Activated CD4-positive, alpha-beta memory T cell treated with anti-CD3 and anti-CD28 coated beads for 36 hours (primary cell): ENCODE measurements at regions of chr13 and their contacts with region 1.

Region 1: DNA sequence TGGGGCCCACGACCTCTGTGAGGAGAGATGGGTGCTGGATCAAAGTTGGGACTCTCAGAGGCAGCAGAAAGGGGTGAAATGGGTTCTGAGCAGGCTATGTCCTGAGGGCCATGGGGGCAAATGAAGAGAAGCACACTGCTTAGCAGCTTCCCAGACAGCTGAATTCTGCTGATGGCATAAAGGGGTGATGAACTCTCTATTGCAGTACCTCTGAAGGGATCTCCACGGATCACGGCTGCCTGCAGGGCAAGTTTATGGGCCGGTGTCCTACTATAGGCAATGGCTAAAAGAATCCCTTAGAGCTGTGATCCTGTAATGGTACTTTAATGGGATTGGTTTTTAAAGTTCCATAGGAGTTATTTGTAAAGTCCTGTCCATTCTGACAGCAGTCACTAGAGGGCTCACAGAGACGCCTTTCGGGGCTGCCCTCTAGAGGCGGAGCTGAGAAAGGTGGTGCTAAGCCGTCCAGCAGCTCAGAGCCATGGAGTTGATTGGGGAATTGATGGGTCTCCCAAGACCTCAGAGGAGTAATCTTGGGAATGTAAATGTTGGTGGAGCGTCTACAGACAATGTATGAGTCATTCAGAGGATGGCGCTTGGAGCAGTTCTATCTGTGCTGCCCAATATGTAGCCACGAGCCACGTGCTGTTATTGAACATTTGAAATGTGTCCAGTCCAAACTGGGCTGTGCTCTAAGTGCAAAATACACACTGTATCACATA is 287.3 kb downstream of the COG6 start:
- DNase-seq: peak; percentile 78
- H3K4me3 Mint-ChIP-seq: no peak overlapping the region
- H3K27ac Mint-ChIP-seq: peak overlapping the region; percentile 9
- H3K4me1 Mint-ChIP-seq: peaks cover 6% of the 10 kb centered on the region
- H3K27me3 Mint-ChIP-seq: no peaks in the 10 kb centered on the region

Region 2: GRCh38 chr13:39684531-39685137 is 258.1 kb before region 1 on chr13:
- CTCF ChIA-PET with region 1: interaction called, 10 read pairs
- POLR2A ChIA-PET with region 1: no interaction called
- intact Hi-C with region 1: loop called (anchors 2 kb)
- DNase-seq: no peak
- H3K4me3 Mint-ChIP-seq: no peak overlapping the region
- H3K27ac Mint-ChIP-seq: no peak overlapping the region
- H3K4me1 Mint-ChIP-seq: peaks cover 20% of the 10 kb centered on the region
- H3K27me3 Mint-ChIP-seq: no peaks in the 10 kb centered on the region

Region 3: GRCh38 chr13:39967199-39967959 is 24.7 kb after region 1 on chr13:
- CTCF ChIA-PET with region 1: interaction called, 15 read pairs
- POLR2A ChIA-PET with region 1: no interaction called
- intact Hi-C with region 1: no loop called
- DNase-seq: no peak
- H3K4me3 Mint-ChIP-seq: no peak overlapping the region
- H3K27ac Mint-ChIP-seq: no peak overlapping the region
- H3K4me1 Mint-ChIP-seq: peaks cover 8% of the 10 kb centered on the region
- H3K27me3 Mint-ChIP-seq: peaks cover 7% of the 10 kb centered on the region

Region 4: GRCh38 chr13:40016953-40017660 is 74.4 kb after region 1 on chr13:
- CTCF ChIA-PET with region 1: interaction called, 11 read pairs
- POLR2A ChIA-PET with region 1: no interaction called
- intact Hi-C with region 1: no loop called
- DNase-seq: no peak
- H3K4me3 Mint-ChIP-seq: no peak overlapping the region
- H3K27ac Mint-ChIP-seq: no peak overlapping the region
- H3K4me1 Mint-ChIP-seq: no peaks in the 10 kb centered on the region
- H3K27me3 Mint-ChIP-seq: peaks cover 2% of the 10 kb centered on the region

Region 5: DNA sequence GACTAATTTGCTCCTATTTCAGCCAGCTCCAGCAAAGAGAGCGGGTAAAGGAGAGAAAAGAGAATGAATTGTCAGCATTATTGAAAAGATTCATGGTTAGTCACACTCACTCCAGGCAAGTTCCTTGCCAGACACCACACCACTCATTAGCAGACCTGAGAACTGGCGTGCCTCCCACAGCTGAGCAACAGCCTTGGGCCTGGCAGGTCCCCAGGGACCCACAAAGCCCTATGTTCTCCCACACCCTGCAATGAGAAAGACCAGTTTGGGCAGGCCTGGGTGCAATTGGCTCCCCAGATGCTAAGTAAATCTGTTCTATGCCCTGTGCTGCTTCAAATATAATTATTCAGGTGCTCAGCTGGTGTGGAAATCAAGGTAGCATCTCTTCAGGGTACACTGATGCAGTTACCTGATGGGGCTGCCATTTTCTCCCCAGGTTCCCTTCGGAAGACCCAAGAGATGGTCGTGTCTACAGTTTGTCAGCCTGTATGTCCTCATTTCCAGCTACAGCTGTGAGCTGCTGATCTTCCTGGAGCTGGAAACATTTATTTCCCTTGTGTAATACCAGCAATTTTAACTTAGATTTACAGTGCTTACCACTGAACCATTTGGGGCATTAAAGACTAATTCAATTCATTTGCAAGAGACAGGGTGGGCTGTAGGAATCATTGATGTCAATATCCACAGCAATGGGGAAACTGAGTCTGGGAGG is 117.7 kb after region 1 on chr13:
- CTCF ChIA-PET with region 1: interaction called, 13 read pairs
- POLR2A ChIA-PET with region 1: no interaction called
- intact Hi-C with region 1: no loop called
- DNase-seq: peak; percentile 83
- H3K4me3 Mint-ChIP-seq: peak overlapping the region; percentile 42
- H3K27ac Mint-ChIP-seq: peak overlapping the region; percentile 47
- H3K4me1 Mint-ChIP-seq: peaks cover 46% of the 10 kb centered on the region
- H3K27me3 Mint-ChIP-seq: no peaks in the 10 kb centered on the region

Region 6: DNA sequence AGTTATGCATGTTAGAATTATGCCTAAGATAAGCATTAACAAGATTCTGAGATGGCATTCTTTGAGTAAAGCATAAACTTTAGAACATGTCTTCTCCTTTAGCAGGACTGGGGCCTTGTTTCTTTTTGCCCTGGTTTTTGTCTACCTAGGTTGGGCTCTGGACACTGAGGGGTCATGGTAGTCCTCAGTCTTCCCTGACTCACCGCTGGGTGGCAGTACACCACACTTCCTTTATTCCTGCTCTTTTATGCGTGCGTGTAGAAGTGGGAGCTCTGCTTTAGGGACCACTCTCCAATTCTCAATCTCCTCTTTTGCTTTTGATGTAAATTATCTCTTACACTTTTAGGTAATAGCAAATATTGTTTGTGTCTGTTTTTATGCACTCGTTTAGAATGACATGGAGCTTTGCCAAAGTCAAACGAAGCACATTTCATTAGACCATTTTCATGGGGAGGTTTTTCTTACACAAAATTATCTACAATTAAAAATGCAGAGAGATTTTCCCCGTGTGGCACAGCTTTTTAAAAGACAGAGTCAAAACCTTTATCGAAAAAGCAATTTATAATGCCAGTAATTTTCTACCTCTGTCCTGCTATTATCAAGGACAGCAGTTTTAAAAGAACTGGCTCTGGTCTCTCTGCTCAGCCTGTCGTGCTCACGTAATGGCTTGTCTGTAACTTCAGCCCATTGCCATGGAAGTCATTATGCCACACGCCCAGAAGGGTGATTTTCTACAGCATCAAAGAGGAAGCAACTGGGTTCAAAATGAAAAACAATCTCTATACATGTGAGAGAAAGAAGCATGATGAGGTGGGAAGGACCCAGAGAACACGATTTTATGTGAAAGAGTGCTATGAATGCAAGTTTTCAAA is 126.7 kb after region 1 on chr13:
- CTCF ChIA-PET with region 1: interaction called, 11 read pairs
- POLR2A ChIA-PET with region 1: no interaction called
- intact Hi-C with region 1: no loop called
- DNase-seq: peak; percentile 83
- H3K4me3 Mint-ChIP-seq: no peak overlapping the region
- H3K27ac Mint-ChIP-seq: no peak overlapping the region
- H3K4me1 Mint-ChIP-seq: peaks cover 24% of the 10 kb centered on the region
- H3K27me3 Mint-ChIP-seq: no peaks in the 10 kb centered on the region

Region 7: DNA sequence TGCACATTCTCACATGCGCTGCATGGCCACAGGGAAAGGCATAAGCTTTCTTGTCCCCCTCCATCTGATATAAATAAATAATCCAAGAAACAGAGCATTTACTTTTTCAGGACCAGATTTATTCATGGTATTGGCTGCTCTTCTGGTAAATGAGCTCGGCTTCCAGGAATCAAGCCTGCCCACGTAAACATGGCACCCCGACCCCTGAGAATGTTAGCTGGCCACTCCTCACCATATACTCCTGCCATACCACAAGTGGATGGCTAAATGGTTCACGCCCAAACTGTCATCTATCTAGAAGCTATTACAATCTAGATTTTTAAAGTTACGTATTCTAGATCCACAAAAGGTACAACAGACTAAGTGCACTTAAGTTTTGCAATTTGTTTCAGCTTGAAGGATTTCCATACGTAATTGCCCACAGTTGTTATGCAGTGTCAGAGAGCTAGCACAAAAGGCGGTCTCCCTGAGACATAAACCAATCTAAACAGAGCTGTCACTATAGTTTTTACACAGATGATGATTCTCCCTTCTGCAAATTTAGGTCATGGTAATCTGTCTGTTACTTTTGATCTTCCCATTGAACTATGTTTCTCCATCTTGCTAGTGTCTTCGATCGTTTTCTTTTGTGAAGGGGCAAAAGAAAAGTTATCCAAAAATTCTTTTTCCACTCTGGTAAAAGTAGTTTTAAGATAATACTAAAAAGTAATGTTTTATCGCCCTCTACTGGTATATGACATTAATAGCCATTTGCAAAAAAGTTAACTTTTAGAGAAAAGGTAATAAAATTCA is 739.9 kb after region 1 on chr13:
- CTCF ChIA-PET with region 1: interaction called, 32 read pairs
- POLR2A ChIA-PET with region 1: interaction called, 3 read pairs
- intact Hi-C with region 1: loop called (anchors 2 kb)
- DNase-seq: no peak
- H3K4me3 Mint-ChIP-seq: no peak overlapping the region
- H3K27ac Mint-ChIP-seq: no peak overlapping the region
- H3K4me1 Mint-ChIP-seq: peaks cover 7% of the 10 kb centered on the region
- H3K27me3 Mint-ChIP-seq: no peaks in the 10 kb centered on the region